K562 (cell line): ENCODE measurements at regions of chr1 and their contacts with region 1.

Region 1: GRCh38 chr1:245156081-245156735 is 1.4 kb downstream of the KIF26B start:
- DNase-seq: peak; percentile 89 to 96 (median 96)
- ATAC-seq: peak; percentile 98
- H3K4me3 ChIP-seq: peak overlapping the region; percentile 35
- H3K27ac ChIP-seq: no peak overlapping the region
- H3K4me1 ChIP-seq: peaks cover 12 to 42% of the 10 kb centered on the region in 2 experiments
- H3K27me3 ChIP-seq: peaks cover 30 to 54% of the 10 kb centered on the region in 2 experiments
- CTCF ChIP-seq: peak; percentile 58 to 96 (median 87)
- EP300 ChIP-seq: no peak
- POLR2A ChIP-seq: no peak
- RAD21 ChIP-seq: peak; percentile 80 to 84

Region 2: GRCh38 chr1:245079021-245079609 is 77.1 kb before region 1 on chr1:
- CTCF ChIA-PET with region 1: no interaction called
- POLR2A ChIA-PET with region 1: no interaction called
- in situ Hi-C with region 1: no loop called
- intact Hi-C with region 1: loop called (anchors 2 kb)
- DNase-seq: peak in 1 of 4 experiments; percentile 47
- ATAC-seq: peak; percentile 75
- H3K4me3 ChIP-seq: no peak overlapping the region
- H3K27ac ChIP-seq: no peak overlapping the region
- H3K4me1 ChIP-seq: no peaks in the 10 kb centered on the region
- H3K27me3 ChIP-seq: no peaks in the 10 kb centered on the region; a peak in 1 of 5 replicates
- CTCF ChIP-seq: peak; percentile 52 to 90 (median 55); a peak in 5 of 6 replicates
- EP300 ChIP-seq: no peak
- POLR2A ChIP-seq: no peak
- RAD21 ChIP-seq: peak; percentile 63 to 82

Region 3: DNA sequence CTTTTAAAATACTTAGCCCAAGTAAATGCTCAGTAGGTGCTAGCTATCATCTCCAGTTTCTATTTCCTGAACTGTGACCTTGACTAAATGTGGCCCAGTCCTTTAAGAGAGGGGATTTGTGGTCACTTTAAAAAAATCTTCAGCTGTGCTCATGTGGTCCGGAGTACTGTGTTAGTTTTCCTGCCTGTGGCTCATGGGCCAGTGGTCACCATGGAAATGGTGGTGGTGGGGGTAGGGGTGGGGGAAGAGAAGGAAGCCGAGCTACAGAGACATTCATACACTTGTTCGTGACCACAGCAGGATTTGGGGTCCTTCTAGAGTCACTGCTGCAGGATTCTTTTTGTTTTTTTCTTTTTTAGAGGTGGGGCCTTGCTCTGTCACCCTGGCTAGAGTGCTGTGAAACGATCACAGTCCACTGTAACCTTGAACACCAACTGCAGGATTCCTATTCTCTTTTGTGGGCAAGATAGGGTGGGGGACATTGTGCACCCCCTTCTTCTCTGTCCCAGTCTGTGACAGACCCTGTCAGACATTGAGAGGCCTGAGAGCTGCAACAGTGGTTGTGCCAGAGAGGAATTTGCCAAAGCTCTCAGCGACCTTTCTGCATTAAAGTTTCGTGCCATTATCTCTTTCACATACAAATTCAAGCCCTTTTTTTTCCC is 24.4 kb after region 1 on chr1:
- CTCF ChIA-PET with region 1: no interaction called
- POLR2A ChIA-PET with region 1: no interaction called
- in situ Hi-C with region 1: no loop called
- intact Hi-C with region 1: no loop called
- DNase-seq: no peak
- ATAC-seq: no peak
- H3K4me3 ChIP-seq: no peak overlapping the region
- H3K27ac ChIP-seq: no peak overlapping the region
- H3K4me1 ChIP-seq: peaks cover 0 to 3% of the 10 kb centered on the region in 2 experiments; a peak in 1 of 5 replicates
- H3K27me3 ChIP-seq: peaks cover 47 to 50% of the 10 kb centered on the region in 2 experiments
- CTCF ChIP-seq: no peak
- EP300 ChIP-seq: no peak
- POLR2A ChIP-seq: no peak
- RAD21 ChIP-seq: no peak

Region 4: DNA sequence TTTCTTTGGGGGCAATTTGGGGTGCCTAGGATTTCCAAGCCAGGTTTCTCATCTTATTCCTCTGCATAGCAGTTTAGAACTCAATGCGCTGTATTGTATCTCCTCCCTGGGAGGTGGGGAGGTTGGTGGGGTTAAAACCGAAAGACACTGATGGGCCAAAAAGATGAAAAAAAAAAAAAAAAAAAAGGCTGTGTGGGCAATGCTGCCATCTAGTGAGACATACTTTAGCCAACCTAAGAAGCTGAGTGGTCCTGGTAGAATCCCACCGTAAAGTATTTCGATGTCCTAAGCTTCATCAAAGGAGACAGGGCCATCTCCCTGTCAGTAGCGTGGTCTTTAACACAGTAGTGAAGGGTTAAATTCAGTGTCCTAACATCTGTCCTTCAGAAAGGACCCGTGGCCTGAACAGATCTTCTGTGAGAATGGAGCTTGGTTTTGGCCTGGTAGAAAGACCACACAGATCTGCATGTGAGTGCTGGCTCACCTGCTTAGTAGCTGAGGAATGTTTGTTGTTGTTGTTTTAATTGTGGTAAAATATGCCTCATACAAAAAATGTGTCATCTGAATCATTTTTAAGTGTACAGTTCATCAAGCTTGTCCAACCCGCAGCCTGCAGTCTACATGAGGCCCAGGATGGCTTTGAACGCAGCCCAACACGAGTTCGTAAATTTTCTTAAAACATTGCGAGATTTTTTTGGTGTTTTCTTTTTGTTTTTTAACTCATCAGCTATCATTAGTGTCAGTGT is 224.8 kb after region 1 on chr1:
- CTCF ChIA-PET with region 1: interaction called, 4 read pairs
- POLR2A ChIA-PET with region 1: interaction called, 3 read pairs
- in situ Hi-C with region 1: no loop called
- intact Hi-C with region 1: loop called (anchors 1 kb)
- DNase-seq: peak in 3 of 4 experiments; percentile 27 to 38 (median 37)
- ATAC-seq: peak; percentile 52
- H3K4me3 ChIP-seq: no peak overlapping the region
- H3K27ac ChIP-seq: no peak overlapping the region
- H3K4me1 ChIP-seq: no peaks in the 10 kb centered on the region
- H3K27me3 ChIP-seq: peaks cover 38 to 49% of the 10 kb centered on the region in 2 experiments
- CTCF ChIP-seq: peak; percentile 48 to 65 (median 52); a peak in 5 of 6 replicates
- EP300 ChIP-seq: no peak
- POLR2A ChIP-seq: no peak
- RAD21 ChIP-seq: peak; percentile 36 to 55

Region 5: DNA sequence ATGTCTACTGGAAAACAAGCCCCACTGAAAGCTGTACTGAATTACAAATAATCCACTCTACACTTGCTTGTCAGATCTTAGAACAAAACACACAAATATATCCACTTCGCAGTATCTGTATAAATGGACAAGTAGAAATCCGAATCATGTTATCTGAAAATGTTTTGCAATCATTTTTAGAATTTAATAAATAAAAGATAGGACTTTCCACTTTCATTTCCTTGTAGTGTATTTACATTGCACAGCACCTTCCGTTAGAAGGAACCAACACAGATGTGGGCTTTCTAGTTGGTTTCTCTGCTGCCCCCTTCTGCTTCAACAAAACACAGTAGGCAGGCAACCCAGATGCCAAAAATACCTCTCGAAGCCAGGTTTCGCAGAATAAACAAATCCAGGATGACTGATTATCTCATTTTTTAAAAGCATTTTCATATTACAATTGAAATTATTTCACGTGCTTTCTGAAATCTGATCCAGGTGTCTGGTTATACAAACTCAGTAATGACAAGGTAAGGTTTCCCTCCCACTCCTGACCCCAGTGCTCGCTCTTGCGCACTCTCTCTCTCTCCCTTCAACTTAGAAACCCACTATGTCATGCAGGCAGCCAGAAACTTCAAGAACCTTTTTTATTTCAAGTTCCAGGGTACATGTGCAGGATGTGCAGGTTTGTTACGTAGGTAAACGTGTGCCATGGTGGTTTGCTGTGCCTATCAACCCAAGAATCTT is 961.0 kb after region 1 on chr1:
- CTCF ChIA-PET with region 1: no interaction called
- POLR2A ChIA-PET with region 1: no interaction called
- in situ Hi-C with region 1: no loop called
- intact Hi-C with region 1: loop called (anchors 10 kb)
- DNase-seq: peak; percentile 53 to 85 (median 63)
- ATAC-seq: peak; percentile 88
- H3K4me3 ChIP-seq: no peak overlapping the region
- H3K27ac ChIP-seq: peak overlapping the region; percentile 38; the same call in 1 of the 3 replicates
- H3K4me1 ChIP-seq: peaks cover 4 to 38% of the 10 kb centered on the region in 2 experiments; a peak in 4 of 5 replicates
- H3K27me3 ChIP-seq: no peaks in the 10 kb centered on the region
- CTCF ChIP-seq: peak; percentile 62 to 74 (median 72)
- EP300 ChIP-seq: no peak
- POLR2A ChIP-seq: no peak
- RAD21 ChIP-seq: peak; percentile 73 to 82; a peak in 3 of 4 replicates

Region 6: DNA sequence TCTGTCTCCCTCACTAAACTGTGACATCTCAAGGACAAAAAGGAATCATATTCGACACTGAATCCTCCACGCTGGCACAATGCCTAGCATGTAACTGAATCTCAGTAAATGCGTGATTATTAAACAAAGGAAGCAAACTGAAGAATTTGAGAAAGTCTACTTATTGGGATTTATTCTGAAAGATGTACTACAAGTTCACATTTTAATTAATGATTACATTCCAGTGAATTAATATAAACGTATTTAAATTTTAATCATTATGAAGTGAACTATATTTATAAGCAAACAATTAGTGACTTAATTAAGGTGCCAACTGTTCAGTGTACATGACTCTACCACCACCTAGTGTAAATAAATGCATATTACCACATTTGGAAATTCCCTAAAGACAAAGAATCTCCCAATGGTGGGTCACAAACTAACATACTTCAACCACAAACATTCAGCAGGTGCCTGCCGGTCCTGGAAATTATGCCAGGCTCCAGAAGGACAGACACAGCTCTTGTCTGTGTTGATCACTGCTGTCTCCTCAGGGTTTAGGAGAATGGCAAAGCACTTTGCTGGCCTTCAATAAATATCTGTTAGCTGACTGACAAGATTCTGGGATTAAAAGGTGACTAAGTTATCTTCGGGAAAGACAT is 1294.5 kb after region 1 on chr1:
- CTCF ChIA-PET with region 1: interaction called, 3 read pairs
- POLR2A ChIA-PET with region 1: interaction called, 3 read pairs
- in situ Hi-C with region 1: no loop called
- intact Hi-C with region 1: loop called (anchors 5 kb)
- DNase-seq: peak; percentile 41 to 57 (median 56)
- ATAC-seq: peak; percentile 85
- H3K4me3 ChIP-seq: no peak overlapping the region
- H3K27ac ChIP-seq: no peak overlapping the region
- H3K4me1 ChIP-seq: no peaks in the 10 kb centered on the region
- H3K27me3 ChIP-seq: no peaks in the 10 kb centered on the region
- CTCF ChIP-seq: peak; percentile 63 to 95 (median 69)
- EP300 ChIP-seq: no peak
- POLR2A ChIP-seq: no peak
- RAD21 ChIP-seq: peak; percentile 96 to 97

Region 7: DNA sequence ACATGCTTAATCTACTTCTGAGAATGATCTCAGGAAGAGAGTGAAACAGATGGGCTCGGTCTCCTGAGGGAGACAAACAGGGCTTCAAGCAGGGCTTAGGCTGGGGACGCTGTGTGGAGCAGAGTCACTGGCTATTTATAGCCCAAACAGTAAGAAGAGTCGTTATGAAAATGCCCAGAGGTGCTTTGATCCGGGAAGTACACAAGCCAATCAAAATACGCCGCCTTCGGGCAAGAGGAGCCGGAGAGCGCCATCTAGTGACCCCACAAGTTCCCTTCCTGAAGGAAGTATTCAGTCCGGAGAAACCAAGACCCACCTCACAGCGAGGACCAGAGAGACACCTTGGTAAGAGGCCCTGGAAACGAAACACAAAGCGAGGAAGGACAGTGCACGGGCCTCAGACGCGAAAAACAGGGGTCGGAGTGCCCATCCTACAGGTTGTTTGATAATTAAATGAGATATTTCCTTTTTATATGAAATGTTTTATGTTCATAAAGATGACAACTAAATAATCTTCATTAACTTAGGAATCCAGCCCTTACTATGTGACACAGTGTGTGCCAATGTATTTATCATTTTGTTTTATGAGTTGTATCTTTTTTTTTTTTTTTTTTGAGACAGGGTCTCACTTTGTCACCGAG is 1543.0 kb after region 1 on chr1:
- CTCF ChIA-PET with region 1: no interaction called
- POLR2A ChIA-PET with region 1: no interaction called
- in situ Hi-C with region 1: no loop called
- intact Hi-C with region 1: loop called (anchors 10 kb)
- DNase-seq: peak; percentile 85 to 95 (median 90)
- ATAC-seq: peak; percentile 92
- H3K4me3 ChIP-seq: no peak overlapping the region
- H3K27ac ChIP-seq: peak overlapping the region; percentile 69
- H3K4me1 ChIP-seq: peaks cover 6 to 11% of the 10 kb centered on the region in 2 experiments; a peak in 4 of 5 replicates
- H3K27me3 ChIP-seq: no peaks in the 10 kb centered on the region
- CTCF ChIP-seq: peak; percentile 92 to 97 (median 97)
- EP300 ChIP-seq: peak; percentile 50; the same call in 1 of the 2 replicates
- POLR2A ChIP-seq: no peak; the same call in 1 of the 2 replicates
- RAD21 ChIP-seq: peak; percentile 80 to 90